MCF 10A (cell line): ENCODE measurements at regions of chr11 and their contacts with region 1.

Region 1: GRCh38 chr11:128026596-128026995 is 560.8 kb downstream of the ETS1 start:
- DNase-seq: peak; percentile 98
- H3K4me3 Mint-ChIP-seq: peak overlapping the region; percentile 30
- H3K27ac Mint-ChIP-seq: peak overlapping the region; percentile 28
- H3K4me1 Mint-ChIP-seq: peaks cover 42% of the 10 kb centered on the region
- H3K27me3 Mint-ChIP-seq: no peaks in the 10 kb centered on the region
- CTCF ChIP-seq: no peak

Region 2: DNA sequence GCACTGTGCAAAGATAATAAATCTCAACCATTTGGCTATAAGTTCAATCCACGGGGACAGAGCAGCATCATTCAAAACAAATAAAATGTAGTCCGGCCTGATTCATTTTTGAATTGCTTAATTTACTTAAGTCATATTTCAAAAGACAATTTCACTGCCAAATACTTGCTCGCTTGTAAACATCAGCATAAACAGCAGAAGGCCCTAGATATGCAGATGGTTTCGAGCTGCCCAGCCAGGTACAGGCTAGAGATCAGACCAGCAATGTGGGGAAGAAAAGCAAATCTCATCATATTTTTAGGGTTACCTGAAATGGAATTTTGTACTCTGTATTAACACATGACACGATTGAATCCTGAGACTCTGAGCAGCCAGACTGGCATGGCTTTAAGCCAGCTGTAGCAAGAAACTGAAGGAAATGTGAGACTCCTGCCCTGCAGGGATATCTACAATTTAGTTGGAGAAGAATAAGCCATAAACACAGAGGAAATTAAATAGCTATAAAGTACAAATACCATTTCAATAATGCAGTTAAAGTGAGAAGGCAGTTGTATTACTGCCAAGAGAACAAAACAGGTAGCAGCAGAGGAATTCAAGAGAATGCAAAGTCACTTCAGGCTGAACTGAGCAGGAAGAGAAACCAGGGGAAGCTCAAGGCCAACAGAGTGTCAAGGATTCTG is 120.5 kb after region 1 on chr11:
- CTCF ChIA-PET with region 1: interaction called, 10 read pairs
- POLR2A ChIA-PET with region 1: interaction called, 7 read pairs
- intact Hi-C with region 1: no loop called
- DNase-seq: peak; percentile 73
- H3K4me3 Mint-ChIP-seq: peak overlapping the region; percentile 48
- H3K27ac Mint-ChIP-seq: peak overlapping the region; percentile 92
- H3K4me1 Mint-ChIP-seq: peaks cover 22% of the 10 kb centered on the region
- H3K27me3 Mint-ChIP-seq: no peaks in the 10 kb centered on the region
- CTCF ChIP-seq: no peak